Caco-2 (cell line): ENCODE measurements at regions of chr12 and their contacts with region 1.

Region 1: GRCh38 chr12:40063414-40063813 is 42.5 kb downstream of the SLC2A13 start:
- DNase-seq: no peak
- H3K4me3 ChIP-seq: no peak overlapping the region
- H3K4me3 Mint-ChIP-seq: no peak overlapping the region
- H3K27ac Mint-ChIP-seq: no peak overlapping the region
- H3K4me1 ChIP-seq: no peaks in the 10 kb centered on the region
- H3K4me1 Mint-ChIP-seq: no peaks in the 10 kb centered on the region
- H3K27me3 ChIP-seq: no peaks in the 10 kb centered on the region
- H3K27me3 Mint-ChIP-seq: no peaks in the 10 kb centered on the region
- CTCF ChIP-seq: no peak

Region 2: DNA sequence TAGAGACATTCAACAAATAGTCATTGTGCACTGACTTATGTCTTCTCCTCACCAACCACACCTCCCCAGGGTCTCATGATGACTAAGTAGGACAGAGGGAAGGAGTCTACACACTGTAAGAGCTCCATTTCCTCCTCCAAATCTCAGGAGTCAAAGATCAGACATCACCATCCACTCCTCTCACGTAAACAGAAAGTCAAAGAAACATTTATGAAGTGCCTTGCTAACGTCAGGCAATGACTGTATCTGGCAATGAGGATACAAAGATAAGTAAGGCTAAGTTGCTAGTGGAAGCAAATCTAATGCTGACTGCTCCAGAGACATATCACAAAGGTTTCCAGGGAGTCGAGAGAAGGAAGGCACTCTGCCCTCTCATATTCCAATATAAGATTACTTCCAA is 46.4 kb before region 1 on chr12:
- CTCF ChIA-PET with region 1: interaction called, 3 read pairs
- POLR2A ChIA-PET with region 1: no interaction called
- intact Hi-C with region 1: loop called (anchors 5 kb)
- DNase-seq: no peak
- H3K4me3 ChIP-seq: no peak overlapping the region
- H3K4me3 Mint-ChIP-seq: no peak overlapping the region
- H3K27ac Mint-ChIP-seq: no peak overlapping the region
- H3K4me1 ChIP-seq: no peaks in the 10 kb centered on the region
- H3K4me1 Mint-ChIP-seq: no peaks in the 10 kb centered on the region
- H3K27me3 ChIP-seq: no peaks in the 10 kb centered on the region
- H3K27me3 Mint-ChIP-seq: no peaks in the 10 kb centered on the region
- CTCF ChIP-seq: no peak